Right ventricle myocardium inferior (tissue), 1 donor: ENCODE measurements at regions of chr16 and their contacts with region 1.

Region 1: DNA sequence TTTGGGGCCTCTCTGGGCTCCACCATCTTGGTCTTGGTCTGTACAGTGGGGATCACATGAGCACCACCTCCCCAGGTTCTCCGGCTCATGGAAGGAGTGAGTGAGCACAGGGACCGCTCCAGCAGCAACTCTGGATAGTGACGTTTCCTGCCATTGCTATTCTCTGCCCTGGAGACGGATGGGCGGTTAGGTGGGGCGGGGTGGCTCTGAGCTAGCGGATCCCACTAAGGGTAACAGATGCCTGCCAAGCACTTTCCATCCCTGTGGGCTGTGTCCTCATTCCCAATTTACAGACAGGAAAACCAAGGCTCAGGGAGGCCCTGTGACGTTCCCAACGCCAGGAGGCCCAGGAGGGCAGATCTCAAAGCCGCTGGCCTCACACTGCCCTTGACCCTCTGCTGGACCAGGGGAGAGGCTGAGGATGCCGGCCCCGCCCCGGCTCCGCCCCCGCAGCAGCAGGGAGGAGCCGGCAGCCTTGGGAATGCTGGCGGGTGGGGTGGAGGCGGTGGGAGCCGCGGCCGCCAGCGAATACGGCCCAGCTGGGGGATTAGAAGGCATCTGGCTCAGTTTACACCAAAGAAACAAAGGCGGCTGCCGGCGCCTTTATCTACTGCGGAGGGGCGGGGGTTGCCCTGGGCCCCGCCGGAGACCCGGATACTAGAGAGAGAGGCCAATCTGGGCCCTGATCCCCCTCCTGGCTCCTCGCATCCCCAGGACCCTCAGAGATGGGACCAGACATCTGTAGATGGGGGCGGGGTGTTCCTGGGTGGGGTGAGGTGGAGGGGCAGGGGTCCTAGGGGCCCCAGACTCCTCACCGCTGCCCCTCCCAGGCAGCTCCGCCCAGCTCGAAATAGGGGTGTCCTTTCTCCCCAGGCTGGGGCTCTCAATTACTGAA is 122.3 kb upstream of the CIBAR2 start:
- DNase-seq: peak; percentile 80
- ATAC-seq: peak; percentile 57

Region 2: DNA sequence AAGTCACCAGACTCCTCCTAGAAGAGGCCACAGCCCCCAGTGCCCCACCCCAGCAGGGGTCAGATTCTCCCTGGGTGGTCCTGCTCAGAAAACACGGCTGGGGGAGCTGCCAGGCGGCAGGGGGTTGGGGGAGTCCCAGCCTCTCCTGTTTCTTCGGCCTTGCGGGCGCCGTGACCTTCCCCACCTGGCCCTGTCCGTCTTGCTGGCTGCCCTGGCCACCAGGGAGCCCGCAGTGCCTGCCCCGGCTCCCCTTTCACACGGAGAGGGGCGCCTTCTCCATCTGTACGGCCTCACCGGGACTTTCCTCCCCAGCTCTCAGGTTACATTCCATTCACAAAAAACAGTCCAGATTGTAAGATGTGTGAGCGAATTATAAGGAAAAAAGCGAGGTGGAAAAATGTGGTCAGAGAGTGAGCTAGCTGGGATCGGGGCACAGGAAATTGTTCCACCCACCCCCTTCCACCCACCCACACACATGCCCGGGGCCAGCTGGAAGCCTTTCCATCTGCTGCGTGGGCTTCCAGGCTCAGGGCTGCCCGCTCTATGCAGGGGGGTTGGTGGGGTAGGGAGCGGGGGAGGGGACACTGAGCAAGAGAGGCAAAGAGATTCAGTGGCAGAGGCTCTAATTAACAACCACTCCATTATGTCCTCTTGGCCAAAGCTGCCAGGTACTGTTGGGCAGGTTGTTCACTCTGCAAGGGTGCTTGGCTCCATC is 107.7 kb before region 1 on chr16:
- intact Hi-C with region 1: loop called (anchors 5 kb)
- DNase-seq: peak; percentile 31
- ATAC-seq: no peak